IMR-90 (cell line): ENCODE measurements at regions of chr7 and their contacts with region 1.

Region 1: GRCh38 chr7:101217388-101218235 is at the starts of genes PLOD3 and ZNHIT1:
- DNase-seq: peak; percentile 97
- ATAC-seq: peak; percentile 92
- H3K4me3 ChIP-seq: peak within 1 kb of the TSS; percentile 96
- H3K27ac ChIP-seq: peak within 1 kb of the TSS; percentile 89
- H3K4me1 ChIP-seq: peaks cover 9% of the 10 kb centered on the region
- H3K27me3 ChIP-seq: no peaks in the 10 kb centered on the region
- CTCF ChIP-seq: peak; percentile 11; the same call in 1 of the 2 replicates
- POLR2A ChIP-seq: peak; percentile 64; the same call in 1 of the 2 replicates
- RAD21 ChIP-seq: peak; percentile 7; the same call in 1 of the 2 replicates
- total RNA-seq, gene PLOD3: 21.7 and 24.4 TPM in 2 replicates
- total RNA-seq, gene ZNHIT1: 31.7 and 34.4 TPM in 2 replicates

Region 2: GRCh38 chr7:101244375-101245146 is 26.9 kb after region 1 on chr7 and contains the start of gene FIS1:
- CTCF ChIA-PET with region 1: interaction called, 7 read pairs
- POLR2A ChIA-PET with region 1: no interaction called
- dilution Hi-C with region 1: no loop called
- in situ Hi-C with region 1: no loop called
- intact Hi-C with region 1: loop called (anchors 2 kb)
- DNase-seq: peak; percentile 82
- ATAC-seq: peak; percentile 97
- H3K4me3 ChIP-seq: peak within 1 kb of the TSS; percentile 73
- H3K27ac ChIP-seq: peak within 1 kb of the TSS; percentile 94
- H3K4me1 ChIP-seq: peaks cover 5% of the 10 kb centered on the region; the same call in 1 of the 2 replicates
- H3K27me3 ChIP-seq: no peaks in the 10 kb centered on the region
- CTCF ChIP-seq: peak; percentile 83
- POLR2A ChIP-seq: peak; percentile 45; the same call in 1 of the 2 replicates
- RAD21 ChIP-seq: peak; percentile 60; the same call in 1 of the 2 replicates
- total RNA-seq, gene FIS1: 241 and 293 TPM in 2 replicates

Region 3: DNA sequence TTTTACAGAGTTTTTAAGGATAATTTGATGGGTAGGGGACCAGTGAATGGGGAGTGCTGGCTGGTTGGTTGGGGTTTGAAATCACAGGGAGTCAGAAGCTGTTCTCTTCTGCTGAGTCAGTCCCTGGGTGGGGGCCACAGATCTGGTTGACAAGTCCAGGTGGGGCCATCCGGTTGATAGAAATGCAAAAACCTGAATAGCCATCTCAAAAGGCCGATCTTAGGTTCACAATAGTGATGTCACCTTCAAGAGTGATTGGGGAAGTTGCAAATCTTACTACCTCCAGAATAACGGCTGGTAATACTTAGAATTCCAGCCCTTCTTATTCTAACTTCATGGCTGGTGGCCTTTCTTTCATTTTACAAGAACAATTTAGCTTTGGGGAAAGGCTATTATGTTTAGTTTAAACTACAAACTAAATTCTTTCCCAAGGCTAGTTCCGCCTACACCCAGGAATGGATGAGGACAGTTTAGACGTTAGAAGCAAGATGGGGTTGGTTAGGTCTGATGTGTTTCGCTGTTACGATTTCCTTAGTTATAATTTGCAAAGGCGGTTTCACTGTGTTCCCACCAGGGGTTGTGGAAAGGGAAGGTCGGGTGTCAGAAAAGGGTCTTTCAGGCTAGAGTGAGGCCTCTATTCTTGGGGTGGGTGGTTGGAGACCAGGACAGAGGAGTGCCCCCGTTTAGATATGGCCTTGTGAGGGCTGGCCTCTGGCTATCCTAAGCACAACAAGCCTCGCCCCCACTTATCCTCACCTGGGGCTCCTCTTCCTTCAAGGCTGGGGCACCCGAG is 76.6 kb after region 1 on chr7:
- CTCF ChIA-PET with region 1: no interaction called
- POLR2A ChIA-PET with region 1: no interaction called
- dilution Hi-C with region 1: no loop called
- in situ Hi-C with region 1: no loop called
- intact Hi-C with region 1: no loop called
- DNase-seq: no peak
- ATAC-seq: no peak
- H3K4me3 ChIP-seq: no peak overlapping the region
- H3K27ac ChIP-seq: no peak overlapping the region
- H3K4me1 ChIP-seq: no peaks in the 10 kb centered on the region
- H3K27me3 ChIP-seq: peaks cover 58% of the 10 kb centered on the region
- CTCF ChIP-seq: no peak
- POLR2A ChIP-seq: no peak
- RAD21 ChIP-seq: no peak